Esophagus squamous epithelium (tissue), 5 donors: ENCODE measurements at regions of chr3 and their contacts with region 1.

Region 1: GRCh38 chr3:100893590-100893989 is 99.6 kb downstream of the ABI3BP start:
- DNase-seq: no peak
- H3K4me3 ChIP-seq: no peak overlapping the region
- H3K27ac ChIP-seq: no peak overlapping the region
- H3K4me1 ChIP-seq: no peaks in the 10 kb centered on the region
- H3K27me3 ChIP-seq: no peaks in the 10 kb centered on the region
- CTCF ChIP-seq: peak in 5 of 6 experiments; percentile 36 to 62 (median 38)
- POLR2A ChIP-seq: no peak

Region 2: DNA sequence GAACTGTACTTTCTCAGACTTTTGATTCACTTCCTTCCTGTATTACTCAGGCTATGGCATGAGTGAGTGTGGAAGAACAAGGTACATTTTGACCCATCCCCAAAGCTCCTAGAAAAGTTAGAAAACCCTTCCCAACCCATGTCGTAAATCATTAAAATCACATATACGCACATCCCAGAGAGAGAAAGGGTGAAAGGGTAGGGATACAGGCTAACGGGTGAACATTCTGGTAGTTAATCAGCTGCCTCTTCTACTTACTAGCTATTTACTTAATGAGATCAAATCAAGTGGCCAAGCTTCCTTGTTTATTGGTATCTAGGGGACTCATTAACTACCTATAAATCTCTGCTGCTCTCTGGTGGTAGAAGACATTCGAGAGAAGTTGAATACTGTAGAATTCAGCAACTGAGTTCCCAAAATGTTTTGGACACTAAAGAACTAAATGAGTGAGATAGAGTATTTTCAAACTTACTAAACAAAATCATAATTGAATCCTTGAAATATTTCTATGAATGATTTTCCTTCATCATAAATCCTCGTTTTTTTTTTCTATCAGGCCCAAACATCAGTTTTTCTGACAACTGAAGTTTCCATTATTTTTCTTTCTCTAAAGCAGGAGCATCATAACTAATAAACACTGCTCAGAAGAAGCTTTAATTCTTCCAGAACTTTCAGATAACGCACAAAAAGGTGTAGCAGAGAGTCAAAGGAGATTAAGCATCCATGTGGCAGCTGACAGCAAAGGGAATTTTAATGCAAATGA is 302.5 kb after region 1 on chr3:
- intact Hi-C with region 1: loop called (anchors 5 kb)
- DNase-seq: no peak
- H3K4me3 ChIP-seq: no peak overlapping the region
- H3K27ac ChIP-seq: no peak overlapping the region
- H3K4me1 ChIP-seq: no peaks in the 10 kb centered on the region
- H3K27me3 ChIP-seq: no peaks in the 10 kb centered on the region
- CTCF ChIP-seq: peak in 5 of 6 experiments; percentile 58 to 73 (median 66)
- POLR2A ChIP-seq: no peak